AG04450 (cell line): ENCODE measurements at regions of chr6 and their contacts with region 1.

Region 1: DNA sequence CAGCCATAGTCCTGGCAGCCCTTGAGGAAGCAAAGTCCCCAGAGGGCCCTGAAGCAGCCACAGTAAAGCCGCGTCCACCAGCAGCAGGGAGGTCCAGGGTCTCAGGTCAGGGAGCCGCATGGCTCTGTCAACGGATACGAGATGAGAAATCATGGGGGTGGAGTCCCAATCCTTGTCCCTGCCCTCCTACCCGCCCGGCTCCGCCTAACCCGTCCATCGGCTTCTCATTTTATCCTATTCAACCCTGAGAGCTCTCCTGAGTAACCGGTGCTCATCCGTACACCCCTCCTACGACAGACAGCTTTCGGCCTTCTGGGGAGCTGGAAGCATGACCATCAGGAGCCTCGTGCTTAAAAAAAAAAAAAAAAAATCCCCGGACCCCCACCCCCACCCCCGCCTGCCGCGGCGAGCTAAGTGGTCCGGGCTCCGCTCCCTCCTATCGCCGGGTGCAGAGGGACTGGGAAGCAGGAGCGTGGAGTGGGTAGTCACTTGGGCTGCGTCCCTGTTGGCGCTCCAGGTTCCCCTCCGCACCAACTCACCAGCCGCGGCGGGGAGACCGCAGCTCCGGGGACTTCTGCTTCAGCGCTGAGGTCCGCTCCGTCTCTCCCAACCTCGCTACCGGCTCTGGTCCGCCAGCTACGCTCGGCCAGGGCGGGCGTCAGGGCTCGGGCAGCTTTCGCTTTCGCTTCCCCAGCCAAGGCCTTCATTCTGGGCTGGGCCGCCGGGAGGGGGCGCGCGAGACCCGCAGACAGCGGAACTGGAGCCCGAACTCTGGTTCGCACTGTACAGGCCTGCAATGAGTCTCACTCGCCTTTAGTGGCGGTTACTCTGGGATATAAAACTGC is at the start of gene TAP2:
- DNase-seq: peak; percentile 74
- H3K4me3 ChIP-seq: peak within 1 kb of the TSS; percentile 92
- H3K27ac ChIP-seq: peak within 1 kb of the TSS; percentile 92
- H3K27me3 ChIP-seq: no peaks in the 10 kb centered on the region
- CTCF ChIP-seq: peak; percentile 96
- polyA plus RNA-seq, gene TAP2: 15.3 and 15.4 TPM in 2 replicates

Region 2: GRCh38 chr6:32568561-32568960 is 269.8 kb before region 1 on chr6:
- CTCF ChIA-PET with region 1: no interaction called
- POLR2A ChIA-PET with region 1: no interaction called
- DNase-seq: no peak
- H3K4me3 ChIP-seq: no peak overlapping the region
- H3K27ac ChIP-seq: no peak overlapping the region
- H3K27me3 ChIP-seq: no peaks in the 10 kb centered on the region
- CTCF ChIP-seq: no peak

Region 3: DNA sequence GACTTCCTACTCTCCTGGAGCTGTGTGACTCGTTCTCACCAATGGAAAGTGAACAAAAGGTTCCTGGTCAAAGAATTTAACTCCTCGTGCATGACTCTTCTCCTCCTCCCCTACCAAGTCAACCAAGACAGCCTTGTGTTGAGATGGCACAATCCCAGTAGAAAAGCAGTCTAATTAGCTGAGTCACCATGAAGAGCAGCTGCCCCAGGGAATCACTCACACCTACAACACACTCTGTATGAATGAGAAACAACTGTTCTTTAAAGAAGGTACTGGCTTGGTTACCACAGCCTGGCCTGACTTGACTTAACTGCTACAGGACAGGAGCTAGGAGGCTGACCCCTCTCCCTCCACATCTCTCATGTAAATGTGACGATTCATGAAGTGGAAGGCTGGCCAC is 18.6 kb before region 1 on chr6:
- CTCF ChIA-PET with region 1: interaction called, 103 read pairs
- POLR2A ChIA-PET with region 1: no interaction called
- DNase-seq: no peak
- H3K4me3 ChIP-seq: no peak overlapping the region
- H3K27ac ChIP-seq: no peak overlapping the region
- H3K27me3 ChIP-seq: peaks cover 11% of the 10 kb centered on the region
- CTCF ChIP-seq: no peak

Region 4: DNA sequence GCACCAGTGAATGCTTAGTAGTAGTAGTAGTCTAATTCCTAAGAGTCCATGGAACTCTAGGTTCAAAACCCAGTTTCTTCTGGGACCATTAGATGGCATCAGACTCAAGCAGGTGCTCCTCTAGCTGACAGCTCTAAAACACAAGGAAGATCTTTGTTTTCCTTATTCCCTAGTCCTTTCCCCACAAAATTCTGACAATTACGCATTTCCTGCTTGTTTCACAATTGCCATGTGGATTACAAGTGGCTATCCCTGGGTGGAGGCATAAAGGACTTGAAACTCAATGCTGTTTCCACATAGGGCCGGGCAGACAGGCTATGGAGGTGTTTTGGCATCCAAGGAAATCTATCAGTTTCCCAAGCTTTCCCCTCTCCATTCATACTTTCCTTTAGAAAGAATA is 12.4 kb before region 1 on chr6:
- CTCF ChIA-PET with region 1: interaction called, 103 read pairs
- POLR2A ChIA-PET with region 1: interaction called, 5 read pairs
- DNase-seq: no peak
- H3K4me3 ChIP-seq: no peak overlapping the region
- H3K27ac ChIP-seq: no peak overlapping the region
- H3K27me3 ChIP-seq: no peaks in the 10 kb centered on the region
- CTCF ChIP-seq: peak; percentile 52

Region 5: DNA sequence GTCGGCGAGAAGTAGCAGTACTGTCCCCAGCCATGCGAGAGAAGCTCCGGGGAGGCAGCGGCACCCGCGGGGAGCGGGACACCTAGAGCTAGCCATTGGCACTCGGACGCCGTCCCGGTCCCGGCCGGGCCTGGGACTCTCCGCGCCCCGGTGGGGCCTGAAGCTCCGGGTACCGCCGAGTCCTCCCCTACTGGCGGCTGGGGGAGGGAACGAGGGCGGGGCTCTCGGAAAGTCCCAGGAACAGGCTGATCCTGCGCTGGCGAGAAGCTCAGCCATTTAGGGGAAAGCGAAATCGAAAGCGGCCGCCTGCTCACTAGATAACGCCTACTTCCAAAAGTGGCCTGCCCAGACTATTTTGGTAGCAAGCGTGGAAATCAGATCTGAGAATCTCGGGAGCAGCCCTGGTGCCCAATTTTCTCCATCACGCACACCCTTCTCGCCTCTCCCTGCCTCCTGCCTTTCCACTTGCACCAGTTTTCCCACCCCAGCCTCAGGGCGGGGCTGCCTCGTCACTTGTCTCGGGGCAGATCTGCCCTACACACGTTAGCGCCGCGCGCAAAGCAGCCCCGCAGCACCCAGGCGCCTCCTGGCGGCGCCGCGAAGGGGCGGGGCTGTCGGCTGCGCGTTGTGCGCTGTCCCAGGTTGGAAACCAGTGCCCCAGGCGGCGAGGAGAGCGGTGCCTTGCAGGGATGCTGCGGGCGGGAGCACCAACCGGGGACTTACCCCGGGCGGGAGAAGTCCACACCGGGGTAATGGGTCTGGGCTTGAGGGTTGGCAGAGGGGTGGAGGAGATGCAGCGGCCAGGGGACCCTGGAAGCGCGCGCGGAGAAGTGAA is 15.4 kb after region 1 on chr6 and contains the starts of genes PSMB9 and TAP1:
- CTCF ChIA-PET with region 1: interaction called, 99 read pairs
- POLR2A ChIA-PET with region 1: interaction called, 8 read pairs
- DNase-seq: peak; percentile 73
- H3K4me3 ChIP-seq: peak within 1 kb of the TSS; percentile 86
- H3K27ac ChIP-seq: peak within 1 kb of the TSS; percentile 93
- H3K27me3 ChIP-seq: peaks cover 2% of the 10 kb centered on the region
- CTCF ChIP-seq: peak; percentile 68
- polyA plus RNA-seq, gene PSMB9: 34.8 and 38.4 TPM in 2 replicates
- polyA plus RNA-seq, gene TAP1: 38.6 and 43.6 TPM in 2 replicates